Activated naive CD4-positive, alpha-beta T cell treated with anti-CD3 and anti-CD28 coated beads for 36 hours (primary cell): ENCODE measurements at regions of chr20 and their contacts with region 1.

Region 1: GRCh38 chr20:1118336-1119127 is at the start of gene PSMF1:
- DNase-seq: peak; percentile 96
- H3K4me3 Mint-ChIP-seq: peak within 1 kb of the TSS; percentile 88
- H3K27ac Mint-ChIP-seq: peak within 1 kb of the TSS; percentile 88
- H3K4me1 Mint-ChIP-seq: peaks cover 52% of the 10 kb centered on the region
- H3K27me3 Mint-ChIP-seq: no peaks in the 10 kb centered on the region
- total RNA-seq, gene PSMF1: 138 to 143 TPM

Region 2: GRCh38 chr20:297098-297924 is 821.2 kb before region 1 on chr20 and contains the start of gene ZCCHC3:
- CTCF ChIA-PET with region 1: no interaction called
- intact Hi-C with region 1: loop called (anchors 2 kb)
- DNase-seq: peak; percentile 87
- H3K4me3 Mint-ChIP-seq: peak within 1 kb of the TSS; percentile 100
- H3K27ac Mint-ChIP-seq: peak within 1 kb of the TSS; percentile 100
- H3K4me1 Mint-ChIP-seq: peaks cover 30% of the 10 kb centered on the region
- H3K27me3 Mint-ChIP-seq: no peaks in the 10 kb centered on the region
- total RNA-seq, gene ZCCHC3: 13.6 to 15.6 TPM

Region 3: GRCh38 chr20:833450-834150 is 284.9 kb before region 1 on chr20 and contains the start of gene FAM110A:
- CTCF ChIA-PET with region 1: no interaction called
- intact Hi-C with region 1: loop called (anchors 1 kb)
- DNase-seq: peak; percentile 97
- H3K4me3 Mint-ChIP-seq: peak within 1 kb of the TSS; percentile 92
- H3K27ac Mint-ChIP-seq: peak within 1 kb of the TSS; percentile 73
- H3K4me1 Mint-ChIP-seq: peaks cover 37% of the 10 kb centered on the region
- H3K27me3 Mint-ChIP-seq: no peaks in the 10 kb centered on the region
- total RNA-seq, gene FAM110A: 15.4 to 16.2 TPM

Region 4: DNA sequence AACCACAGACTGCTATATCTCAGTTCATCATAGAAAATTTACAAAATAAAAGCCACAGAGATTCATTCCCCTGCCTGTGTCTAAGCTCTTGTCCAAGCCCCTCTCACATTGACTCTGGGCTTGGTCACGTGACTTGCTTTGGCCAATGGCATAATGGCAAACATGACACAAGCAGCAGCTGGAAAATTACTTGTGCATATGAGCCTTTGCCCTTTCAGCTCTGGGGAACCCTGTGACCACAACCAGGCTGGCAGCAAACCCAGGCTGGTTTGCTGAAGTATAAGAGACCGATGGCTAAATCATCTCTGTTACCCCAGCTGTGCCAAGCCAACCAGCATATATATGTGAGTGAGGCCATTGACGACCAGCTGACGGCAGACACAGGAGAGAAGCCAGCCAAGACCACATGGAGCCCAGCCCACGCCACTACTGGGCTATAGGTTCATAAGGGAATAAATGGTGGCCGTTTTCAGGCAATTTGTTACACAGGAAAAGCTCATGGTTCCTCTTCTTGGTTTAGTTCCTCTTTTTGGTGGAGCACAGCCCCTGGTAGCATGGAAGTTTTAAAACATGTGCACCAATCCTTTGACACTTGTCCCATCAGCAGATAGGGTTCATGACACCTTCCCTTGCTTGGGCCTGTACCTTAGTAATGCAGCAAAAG is 84.6 kb before region 1 on chr20:
- CTCF ChIA-PET with region 1: no interaction called
- intact Hi-C with region 1: no loop called
- DNase-seq: peak; percentile 15
- H3K4me3 Mint-ChIP-seq: no peak overlapping the region
- H3K27ac Mint-ChIP-seq: no peak overlapping the region
- H3K4me1 Mint-ChIP-seq: no peaks in the 10 kb centered on the region
- H3K27me3 Mint-ChIP-seq: peaks cover 15% of the 10 kb centered on the region

Region 5: GRCh38 chr20:1062334-1063010 is 56.1 kb before region 1 on chr20:
- CTCF ChIA-PET with region 1: no interaction called
- intact Hi-C with region 1: no loop called
- DNase-seq: no peak
- H3K4me3 Mint-ChIP-seq: no peak overlapping the region
- H3K27ac Mint-ChIP-seq: no peak overlapping the region
- H3K4me1 Mint-ChIP-seq: no peaks in the 10 kb centered on the region
- H3K27me3 Mint-ChIP-seq: peaks cover 3% of the 10 kb centered on the region

Region 6: GRCh38 chr20:1075616-1076015 is 42.9 kb before region 1 on chr20:
- CTCF ChIA-PET with region 1: no interaction called
- intact Hi-C with region 1: no loop called
- DNase-seq: no peak
- H3K4me3 Mint-ChIP-seq: no peak overlapping the region
- H3K27ac Mint-ChIP-seq: no peak overlapping the region
- H3K4me1 Mint-ChIP-seq: no peaks in the 10 kb centered on the region
- H3K27me3 Mint-ChIP-seq: no peaks in the 10 kb centered on the region

Region 7: DNA sequence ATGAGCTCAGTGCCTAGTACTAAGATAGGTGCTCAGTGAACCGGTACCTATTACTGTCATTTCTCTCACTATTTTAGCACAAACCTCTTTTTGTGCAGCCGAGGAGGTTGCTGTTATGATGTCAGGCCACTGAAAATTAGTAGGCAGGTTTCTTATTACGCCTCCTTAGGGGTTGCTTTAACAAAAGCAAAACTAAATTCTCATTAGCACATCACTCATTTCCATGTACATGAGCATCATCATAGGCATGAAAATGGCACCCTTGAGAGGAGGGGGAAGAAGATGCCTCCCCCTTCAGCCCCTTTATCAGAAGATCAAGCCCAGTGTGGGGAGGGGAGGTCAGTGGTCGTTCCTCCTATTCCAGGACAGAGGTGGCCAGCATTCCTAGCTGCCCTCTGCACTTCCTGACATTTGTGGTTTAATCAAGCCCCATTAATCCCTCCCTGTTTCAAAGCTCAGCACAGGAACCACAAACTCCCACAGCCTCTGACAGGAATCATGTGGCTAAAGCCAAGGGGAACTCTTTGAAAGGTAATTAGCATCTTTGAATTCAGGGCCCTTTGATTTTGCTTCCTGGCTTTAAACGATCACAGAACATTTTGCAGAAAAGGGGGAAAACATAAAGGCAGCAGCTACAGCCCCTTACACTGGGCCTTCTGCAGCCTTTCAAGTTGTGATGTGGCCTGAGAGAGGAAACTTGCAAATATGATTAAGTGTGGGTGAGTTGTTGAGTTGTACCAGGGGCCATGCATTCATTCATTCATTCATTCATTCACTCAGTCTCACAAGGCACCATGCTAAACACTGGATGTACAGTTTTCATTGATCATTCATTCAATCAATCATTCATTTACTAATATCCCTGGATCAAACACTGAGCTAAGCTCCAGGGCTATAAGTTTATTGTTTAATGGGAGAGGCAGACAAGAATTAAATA is 32.0 kb before region 1 on chr20:
- CTCF ChIA-PET with region 1: no interaction called
- intact Hi-C with region 1: loop called (anchors 1 kb)
- DNase-seq: peak; percentile 51
- H3K4me3 Mint-ChIP-seq: no peak overlapping the region
- H3K27ac Mint-ChIP-seq: peak overlapping the region; percentile 87
- H3K4me1 Mint-ChIP-seq: peaks cover 32% of the 10 kb centered on the region
- H3K27me3 Mint-ChIP-seq: no peaks in the 10 kb centered on the region

Region 8: DNA sequence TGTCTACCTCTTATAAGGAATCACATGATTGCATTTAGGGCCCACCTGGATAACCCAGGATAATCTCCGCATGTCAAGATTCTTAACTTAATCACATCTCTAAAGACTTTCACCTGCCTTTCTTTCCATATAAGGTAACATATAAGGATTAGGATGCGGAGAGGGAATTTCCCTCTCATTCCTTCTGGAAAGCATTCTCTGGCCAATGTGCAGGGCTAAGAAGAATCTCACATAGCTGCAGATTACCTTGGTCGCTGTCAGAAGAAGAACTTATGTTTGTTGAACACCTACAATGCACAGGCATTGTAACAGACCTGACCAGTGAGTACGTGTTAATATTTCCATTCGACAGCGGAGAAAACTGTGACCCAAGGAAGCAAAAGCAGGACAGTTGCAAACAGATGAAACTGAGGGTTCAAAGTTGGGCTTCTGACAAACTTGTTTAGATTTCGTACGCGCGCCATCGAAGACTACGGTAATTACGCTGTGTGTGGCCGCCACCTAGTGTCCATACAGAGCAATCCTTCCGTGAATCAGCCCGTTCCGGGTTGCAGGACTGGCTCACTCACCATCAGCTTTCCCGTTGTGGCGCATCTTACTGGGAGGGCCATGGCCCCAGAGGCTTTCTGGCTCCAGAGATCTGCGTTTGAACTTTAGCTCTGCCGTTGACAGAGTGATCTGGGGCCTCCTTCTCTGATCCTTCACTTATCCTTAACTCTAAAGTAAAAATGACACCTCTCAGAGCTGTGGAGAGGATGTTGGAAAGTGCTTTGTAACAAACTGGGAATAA is 94.3 kb after region 1 on chr20:
- CTCF ChIA-PET with region 1: interaction called, 3 read pairs
- intact Hi-C with region 1: loop called (anchors 1 kb)
- DNase-seq: peak; percentile 88
- H3K4me3 Mint-ChIP-seq: no peak overlapping the region
- H3K27ac Mint-ChIP-seq: no peak overlapping the region
- H3K4me1 Mint-ChIP-seq: peaks cover 39% of the 10 kb centered on the region
- H3K27me3 Mint-ChIP-seq: no peaks in the 10 kb centered on the region

Region 9: DNA sequence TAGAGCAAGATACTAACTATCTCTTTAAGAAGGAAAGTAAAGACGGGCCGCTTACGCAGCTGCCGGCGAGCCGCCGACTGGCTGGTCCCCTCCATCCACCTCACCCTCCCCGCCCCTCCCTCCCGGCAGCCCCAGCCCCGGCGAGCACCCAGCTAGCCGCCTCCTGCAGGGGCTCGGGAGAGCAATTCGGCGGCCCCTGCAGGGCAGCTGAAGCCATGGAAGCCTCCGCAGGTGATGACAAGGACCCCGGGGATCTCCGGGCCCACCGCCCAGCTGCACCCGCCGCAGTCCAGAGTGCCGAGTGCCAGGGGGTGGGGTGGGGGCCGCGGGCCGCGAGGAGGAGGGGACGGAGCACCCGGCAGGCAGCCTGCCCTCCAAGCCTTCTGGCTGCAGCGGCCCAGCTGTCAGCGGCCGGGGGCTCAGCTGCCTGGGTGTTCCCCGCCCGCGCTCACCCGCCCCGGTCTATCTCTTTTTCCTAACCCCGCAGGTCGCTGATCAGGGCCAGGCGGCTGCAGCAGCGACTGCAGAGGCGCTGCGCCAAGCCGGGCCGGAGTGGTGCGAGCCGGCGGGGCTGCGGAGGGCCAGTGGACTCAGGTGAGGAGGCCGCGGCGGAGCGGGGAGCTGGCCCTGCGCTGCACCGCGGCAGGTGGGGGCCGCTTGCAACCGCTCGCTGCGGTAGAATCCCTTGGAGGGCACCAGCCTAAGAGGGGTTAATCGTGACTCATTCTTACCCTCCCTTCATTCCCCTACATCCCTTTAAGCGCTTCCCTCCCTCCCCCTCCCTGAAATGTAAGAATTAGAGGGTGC is 147.8 kb after region 1 on chr20 and contains the start of gene SNPH:
- CTCF ChIA-PET with region 1: no interaction called
- intact Hi-C with region 1: loop called (anchors 1 kb)
- DNase-seq: peak; percentile 85
- H3K4me3 Mint-ChIP-seq: peak within 1 kb of the TSS; percentile 90
- H3K27ac Mint-ChIP-seq: peak within 1 kb of the TSS; percentile 85
- H3K4me1 Mint-ChIP-seq: peaks cover 53% of the 10 kb centered on the region
- H3K27me3 Mint-ChIP-seq: no peaks in the 10 kb centered on the region
- total RNA-seq, gene SNPH: 6.7 to 7.3 TPM

Region 10: GRCh38 chr20:1437235-1437904 is 318.8 kb after region 1 on chr20:
- CTCF ChIA-PET with region 1: no interaction called
- intact Hi-C with region 1: loop called (anchors 2 kb)
- DNase-seq: peak; percentile 91
- H3K4me3 Mint-ChIP-seq: no peak overlapping the region
- H3K27ac Mint-ChIP-seq: no peak overlapping the region
- H3K4me1 Mint-ChIP-seq: peaks cover 30% of the 10 kb centered on the region
- H3K27me3 Mint-ChIP-seq: no peaks in the 10 kb centered on the region